ENCODE measurements at regions of chr13 and their contacts with region 1.

Region 1: GRCh38 chr13:32586080-32586900 is at the start of gene PDS5B:
- DNase-seq: peak; percentile 95
- H3K4me3 Mint-ChIP-seq: peak within 1 kb of the TSS; percentile 95
- H3K27ac Mint-ChIP-seq: peak within 1 kb of the TSS; percentile 91
- H3K4me1 Mint-ChIP-seq: peaks cover 36% of the 10 kb centered on the region
- H3K27me3 Mint-ChIP-seq: no peaks in the 10 kb centered on the region
- total RNA-seq, gene PDS5B: 48.0 to 51.6 TPM

Region 2: GRCh38 chr13:32427852-32428580 is 158.3 kb before region 1 on chr13 and contains the start of gene N4BP2L1:
- CTCF ChIA-PET with region 1: interaction called, 6 read pairs
- intact Hi-C with region 1: loop called (anchors 1 kb)
- DNase-seq: peak; percentile 95
- H3K4me3 Mint-ChIP-seq: peak within 1 kb of the TSS; percentile 94
- H3K27ac Mint-ChIP-seq: peak within 1 kb of the TSS; percentile 97
- H3K4me1 Mint-ChIP-seq: peaks cover 31% of the 10 kb centered on the region
- H3K27me3 Mint-ChIP-seq: no peaks in the 10 kb centered on the region
- total RNA-seq, gene N4BP2L1: 22.6 TPM

Region 3: DNA sequence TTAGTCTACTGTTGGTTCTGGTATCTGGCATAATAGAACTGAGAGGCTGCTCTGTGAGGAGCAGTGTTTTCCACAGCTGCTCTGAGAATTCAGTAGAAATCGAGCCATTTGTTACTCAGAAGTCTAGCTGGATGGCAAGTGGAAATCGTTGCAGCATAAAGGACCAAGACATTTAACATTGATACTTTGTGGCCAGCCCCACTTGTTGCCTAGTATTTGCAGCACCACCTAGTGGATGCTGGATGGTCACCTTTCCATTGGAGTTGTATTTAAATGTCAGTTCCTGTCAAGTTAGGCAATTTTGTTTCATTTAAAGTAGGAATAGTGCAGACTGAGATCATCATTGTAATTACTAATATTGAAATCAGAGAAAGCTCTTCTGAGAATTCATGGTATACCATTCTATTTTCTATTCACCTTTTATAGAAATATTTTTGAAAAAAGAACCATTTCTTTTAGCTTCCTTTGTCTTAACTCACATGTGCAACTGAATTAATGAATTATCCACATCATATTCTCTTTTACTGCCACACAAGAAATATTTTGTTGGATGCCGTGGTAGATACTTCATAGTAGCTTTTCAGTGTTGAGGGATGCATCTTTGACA is 64.5 kb after region 1 on chr13:
- CTCF ChIA-PET with region 1: interaction called, 38 read pairs
- intact Hi-C with region 1: loop called (anchors 1 kb)
- DNase-seq: peak; percentile 79
- H3K4me3 Mint-ChIP-seq: no peak overlapping the region
- H3K27ac Mint-ChIP-seq: peak overlapping the region; percentile 12
- H3K4me1 Mint-ChIP-seq: peaks cover 39% of the 10 kb centered on the region
- H3K27me3 Mint-ChIP-seq: no peaks in the 10 kb centered on the region

Region 4: DNA sequence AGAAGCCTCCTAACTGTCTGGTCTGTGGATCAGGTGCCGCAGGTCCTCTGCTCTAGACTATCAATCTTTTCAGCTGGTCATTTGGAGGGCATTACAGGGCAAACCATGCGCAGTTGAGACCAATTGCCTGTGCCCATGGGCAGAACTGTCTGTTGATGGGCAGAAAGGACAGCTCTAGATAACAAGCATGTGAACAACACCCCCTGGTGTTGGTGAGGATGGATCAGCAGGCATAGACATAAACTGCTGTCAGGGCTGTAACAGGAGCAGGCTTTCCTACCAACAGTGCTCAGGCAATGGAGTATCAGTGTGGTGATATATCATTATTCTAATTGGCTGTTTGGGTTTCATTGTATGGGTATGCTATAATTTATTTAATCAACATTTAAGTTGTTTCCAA is 325.2 kb after region 1 on chr13:
- CTCF ChIA-PET with region 1: interaction called, 3 read pairs
- intact Hi-C with region 1: loop called (anchors 1 kb)
- DNase-seq: peak; percentile 56
- H3K4me3 Mint-ChIP-seq: no peak overlapping the region
- H3K27ac Mint-ChIP-seq: no peak overlapping the region
- H3K4me1 Mint-ChIP-seq: peaks cover 2% of the 10 kb centered on the region
- H3K27me3 Mint-ChIP-seq: peaks cover 3% of the 10 kb centered on the region

Region 5: GRCh38 chr13:32984846-32985544 is 398.7 kb after region 1 on chr13:
- CTCF ChIA-PET with region 1: no interaction called
- intact Hi-C with region 1: no loop called
- DNase-seq: no peak
- H3K4me3 Mint-ChIP-seq: no peak overlapping the region
- H3K27ac Mint-ChIP-seq: no peak overlapping the region
- H3K4me1 Mint-ChIP-seq: peaks cover 5% of the 10 kb centered on the region
- H3K27me3 Mint-ChIP-seq: peaks cover 8% of the 10 kb centered on the region

Region 6: GRCh38 chr13:33228648-33229445 is 642.6 kb after region 1 on chr13:
- CTCF ChIA-PET with region 1: no interaction called
- intact Hi-C with region 1: loop called (anchors 1 kb)
- DNase-seq: peak; percentile 24
- H3K4me3 Mint-ChIP-seq: no peak overlapping the region
- H3K27ac Mint-ChIP-seq: no peak overlapping the region
- H3K4me1 Mint-ChIP-seq: peaks cover 8% of the 10 kb centered on the region
- H3K27me3 Mint-ChIP-seq: peaks cover 12% of the 10 kb centered on the region

Region 7: GRCh38 chr13:33817901-33818706 is 1231.8 kb after region 1 on chr13 and contains the start of gene RFC3:
- CTCF ChIA-PET with region 1: no interaction called
- intact Hi-C with region 1: loop called (anchors 10 kb)
- DNase-seq: peak; percentile 96
- H3K4me3 Mint-ChIP-seq: peak within 1 kb of the TSS; percentile 94
- H3K27ac Mint-ChIP-seq: peak within 1 kb of the TSS; percentile 90
- H3K4me1 Mint-ChIP-seq: peaks cover 27% of the 10 kb centered on the region
- H3K27me3 Mint-ChIP-seq: no peaks in the 10 kb centered on the region
- total RNA-seq, gene RFC3: 51.6 TPM